CD14-positive monocyte (primary cell): ENCODE measurements at regions of chr1 and their contacts with region 1.

Region 1: GRCh38 chr1:40849801-40850592 is 12.2 kb downstream of the CITED4 start:
- DNase-seq: peak; percentile 49 to 63 (median 61)
- H3K4me3 ChIP-seq: no peak overlapping the region
- H3K4me3 Mint-ChIP-seq: peak overlapping the region in 1 of 2 donors; percentile 21
- H3K27ac ChIP-seq: no peak overlapping the region
- H3K27ac Mint-ChIP-seq: no peak overlapping the region
- H3K4me1 ChIP-seq: peaks cover 6 to 14% of the 10 kb centered on the region in 2 donors
- H3K4me1 Mint-ChIP-seq: peaks cover 23% of the 10 kb centered on the region
- H3K27me3 ChIP-seq: no peaks in the 10 kb centered on the region
- H3K27me3 Mint-ChIP-seq: peaks cover 2 to 7% (median 2%) of the 10 kb centered on the region in 3 donors
- CTCF ChIP-seq: peak; percentile 92

Region 2: GRCh38 chr1:39799770-39800470 is 1050.1 kb before region 1 on chr1:
- intact Hi-C with region 1: no loop called
- DNase-seq: peak; percentile 66 to 78 (median 66)
- H3K4me3 ChIP-seq: peak overlapping the region; percentile 41 to 69 (median 44)
- H3K4me3 Mint-ChIP-seq: peak overlapping the region; percentile 74 to 78
- H3K27ac ChIP-seq: peak overlapping the region; percentile 76 to 89
- H3K27ac Mint-ChIP-seq: peak overlapping the region; percentile 91 to 97 (median 95)
- H3K4me1 ChIP-seq: peaks cover 45 to 61% of the 10 kb centered on the region in 2 donors
- H3K4me1 Mint-ChIP-seq: peaks cover 54% of the 10 kb centered on the region
- H3K27me3 ChIP-seq: no peaks in the 10 kb centered on the region
- H3K27me3 Mint-ChIP-seq: no peaks in the 10 kb centered on the region
- CTCF ChIP-seq: peak; percentile 92

Region 3: DNA sequence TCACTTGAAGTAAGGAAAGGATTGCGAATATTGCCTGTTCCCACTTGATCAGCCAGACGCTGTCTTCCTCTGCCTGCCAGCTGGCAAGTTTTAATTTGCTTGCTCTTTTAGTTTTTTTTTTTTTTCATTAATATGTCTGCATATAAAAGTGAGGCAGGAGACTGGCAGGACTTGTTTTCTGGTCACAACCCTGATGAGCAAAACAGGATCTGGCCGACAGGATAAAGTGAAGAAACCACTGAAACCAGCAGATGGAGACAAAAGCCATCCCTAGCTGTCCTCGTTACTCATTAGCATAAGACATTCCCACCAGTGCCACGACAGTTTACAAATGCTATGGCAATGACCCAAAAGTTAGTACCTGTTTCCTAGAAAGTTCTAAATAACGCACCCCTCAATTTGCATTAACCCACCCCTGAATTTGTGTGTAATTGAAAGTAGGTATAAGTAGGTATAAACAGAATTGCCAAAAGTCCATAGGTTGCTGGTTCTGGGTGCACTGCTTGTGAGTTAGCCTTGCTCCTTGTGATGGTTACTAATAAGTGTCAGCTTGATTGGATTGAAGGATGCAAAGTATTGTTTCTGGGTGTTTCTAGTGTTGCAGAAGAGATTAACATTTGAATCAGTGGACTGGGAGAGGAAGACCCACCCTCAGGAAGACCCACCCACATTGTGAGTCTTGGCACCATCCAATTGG is 257.7 kb before region 1 on chr1:
- intact Hi-C with region 1: loop called in 1 of 2 experiments (anchors 10 kb)
- DNase-seq: peak; percentile 31 to 57 (median 56)
- H3K4me3 ChIP-seq: no peak overlapping the region
- H3K4me3 Mint-ChIP-seq: no peak overlapping the region
- H3K27ac ChIP-seq: no peak overlapping the region
- H3K27ac Mint-ChIP-seq: no peak overlapping the region
- H3K4me1 ChIP-seq: peaks cover 12 to 22% of the 10 kb centered on the region in 2 donors
- H3K4me1 Mint-ChIP-seq: peaks cover 27% of the 10 kb centered on the region
- H3K27me3 ChIP-seq: no peaks in the 10 kb centered on the region
- H3K27me3 Mint-ChIP-seq: peaks cover 1 to 6% (median 2%) of the 10 kb centered on the region in 3 donors
- CTCF ChIP-seq: peak; percentile 67

Region 4: DNA sequence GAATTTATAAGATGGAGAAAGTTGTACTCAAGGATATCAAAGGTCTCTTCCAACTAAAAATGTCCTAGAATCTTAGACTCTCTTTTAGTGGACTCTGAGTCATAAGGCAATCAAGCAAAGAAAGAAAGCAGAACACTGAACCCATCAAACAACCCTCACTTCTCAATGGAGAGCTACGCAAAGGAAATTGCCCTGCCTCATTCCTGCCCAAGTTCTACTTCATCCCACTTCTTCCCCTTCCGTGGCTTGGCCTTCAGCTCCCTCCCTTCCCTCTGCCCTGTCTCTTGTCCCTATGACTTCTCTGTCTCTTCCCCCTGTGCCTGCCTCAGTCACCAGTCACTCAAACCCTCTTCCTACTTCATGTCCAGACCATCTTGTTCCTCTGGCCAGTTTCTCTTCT is 243.0 kb before region 1 on chr1:
- intact Hi-C with region 1: loop called in 1 of 2 experiments (anchors 10 kb)
- DNase-seq: no peak
- H3K4me3 ChIP-seq: no peak overlapping the region
- H3K4me3 Mint-ChIP-seq: no peak overlapping the region
- H3K27ac ChIP-seq: peak overlapping the region in 1 of 2 donors; percentile 52
- H3K27ac Mint-ChIP-seq: peak overlapping the region in 4 of 7 donors; percentile 32 to 75 (median 54)
- H3K4me1 ChIP-seq: peaks cover 13 to 27% of the 10 kb centered on the region in 2 donors
- H3K4me1 Mint-ChIP-seq: peaks cover 18% of the 10 kb centered on the region
- H3K27me3 ChIP-seq: no peaks in the 10 kb centered on the region
- H3K27me3 Mint-ChIP-seq: peaks cover 0 to 5% (median 0%) of the 10 kb centered on the region in 3 donors
- CTCF ChIP-seq: no peak

Region 5: GRCh38 chr1:41078616-41079015 is 228.6 kb after region 1 on chr1:
- intact Hi-C with region 1: no loop called
- DNase-seq: no peak
- H3K4me3 ChIP-seq: no peak overlapping the region
- H3K4me3 Mint-ChIP-seq: no peak overlapping the region
- H3K27ac ChIP-seq: no peak overlapping the region
- H3K27ac Mint-ChIP-seq: no peak overlapping the region
- H3K4me1 ChIP-seq: no peaks in the 10 kb centered on the region
- H3K4me1 Mint-ChIP-seq: no peaks in the 10 kb centered on the region
- H3K27me3 ChIP-seq: no peaks in the 10 kb centered on the region
- H3K27me3 Mint-ChIP-seq: no peaks in the 10 kb centered on the region
- CTCF ChIP-seq: no peak